OCI-LY7 (cell line): ENCODE measurements at regions of chr3 and their contacts with region 1.

Region 1: GRCh38 chr3:9932843-9933560 is 632 bp upstream of the CRELD1 start:
- DNase-seq: peak; percentile 87
- H3K4me3 ChIP-seq: peak overlapping the region; percentile 71
- H3K27ac ChIP-seq: peak overlapping the region; percentile 76
- H3K4me1 ChIP-seq: peaks cover 22% of the 10 kb centered on the region
- CTCF ChIP-seq: peak; percentile 85

Region 2: GRCh38 chr3:9396700-9397521 is 536.1 kb before region 1 on chr3:
- CTCF ChIA-PET with region 1: no interaction called
- POLR2A ChIA-PET with region 1: no interaction called
- intact Hi-C with region 1: loop called (anchors 5 kb)
- DNase-seq: peak; percentile 99
- H3K4me3 ChIP-seq: peak overlapping the region; percentile 96
- H3K27ac ChIP-seq: peak overlapping the region; percentile 87
- H3K4me1 ChIP-seq: peaks cover 59% of the 10 kb centered on the region
- CTCF ChIP-seq: no peak

Region 3: GRCh38 chr3:9792405-9793160 is 140.4 kb before region 1 on chr3 and contains the starts of genes ARPC4 and TADA3:
- CTCF ChIA-PET with region 1: no interaction called
- POLR2A ChIA-PET with region 1: no interaction called
- intact Hi-C with region 1: loop called (anchors 5 kb)
- DNase-seq: peak; percentile 98
- H3K4me3 ChIP-seq: peak within 1 kb of the TSS; percentile 96
- H3K27ac ChIP-seq: peak within 1 kb of the TSS; percentile 72
- H3K4me1 ChIP-seq: peaks cover 47% of the 10 kb centered on the region
- CTCF ChIP-seq: no peak
- total RNA-seq, gene ARPC4: 89.8 and 99.5 TPM in 2 replicates
- total RNA-seq, gene TADA3: 51.6 and 62.0 TPM in 2 replicates

Region 4: GRCh38 chr3:9890249-9891071 is 42.5 kb before region 1 on chr3 and contains the start of gene JAGN1:
- CTCF ChIA-PET with region 1: no interaction called
- POLR2A ChIA-PET with region 1: interaction called, 3 read pairs
- intact Hi-C with region 1: loop called (anchors 2 kb)
- DNase-seq: peak; percentile 92
- H3K4me3 ChIP-seq: peak within 1 kb of the TSS; percentile 95
- H3K27ac ChIP-seq: peak within 1 kb of the TSS; percentile 60
- H3K4me1 ChIP-seq: peaks cover 11% of the 10 kb centered on the region
- CTCF ChIP-seq: peak; percentile 23; the same call in 1 of the 2 replicates
- total RNA-seq, gene JAGN1: 20.4 and 21.0 TPM in 2 replicates

Region 5: GRCh38 chr3:9986237-9986725 is 53.3 kb after region 1 on chr3:
- CTCF ChIA-PET with region 1: no interaction called
- POLR2A ChIA-PET with region 1: interaction called, 10 read pairs
- intact Hi-C with region 1: loop called (anchors 2 kb)
- DNase-seq: no peak
- H3K4me3 ChIP-seq: peak overlapping the region; percentile 96
- H3K27ac ChIP-seq: peak overlapping the region; percentile 81
- H3K4me1 ChIP-seq: peaks cover 19% of the 10 kb centered on the region
- CTCF ChIP-seq: no peak

Region 6: GRCh38 chr3:10322352-10322710 is 389.3 kb after region 1 on chr3:
- CTCF ChIA-PET with region 1: interaction called, 3 read pairs
- POLR2A ChIA-PET with region 1: interaction called, 5 read pairs
- intact Hi-C with region 1: loop called (anchors 5 kb)
- DNase-seq: peak; percentile 64
- H3K4me3 ChIP-seq: no peak overlapping the region
- H3K27ac ChIP-seq: no peak overlapping the region
- H3K4me1 ChIP-seq: peaks cover 20% of the 10 kb centered on the region
- CTCF ChIP-seq: peak; percentile 83